ENCODE measurements at regions of chr20 and their contacts with region 1.

Region 1: GRCh38 chr20:52083627-52084232 is 107.8 kb downstream of the ZFP64 start:
- DNase-seq: peak; percentile 54
- ATAC-seq: peak; percentile 85
- H3K4me3 ChIP-seq: no peak overlapping the region
- H3K27ac ChIP-seq: no peak overlapping the region
- H3K4me1 ChIP-seq: no peaks in the 10 kb centered on the region
- H3K27me3 ChIP-seq: no peaks in the 10 kb centered on the region
- CTCF ChIP-seq: peak; percentile 58 to 85 (median 77)
- POLR2A ChIP-seq: no peak
- RAD21 ChIP-seq: peak; percentile 95

Region 2: DNA sequence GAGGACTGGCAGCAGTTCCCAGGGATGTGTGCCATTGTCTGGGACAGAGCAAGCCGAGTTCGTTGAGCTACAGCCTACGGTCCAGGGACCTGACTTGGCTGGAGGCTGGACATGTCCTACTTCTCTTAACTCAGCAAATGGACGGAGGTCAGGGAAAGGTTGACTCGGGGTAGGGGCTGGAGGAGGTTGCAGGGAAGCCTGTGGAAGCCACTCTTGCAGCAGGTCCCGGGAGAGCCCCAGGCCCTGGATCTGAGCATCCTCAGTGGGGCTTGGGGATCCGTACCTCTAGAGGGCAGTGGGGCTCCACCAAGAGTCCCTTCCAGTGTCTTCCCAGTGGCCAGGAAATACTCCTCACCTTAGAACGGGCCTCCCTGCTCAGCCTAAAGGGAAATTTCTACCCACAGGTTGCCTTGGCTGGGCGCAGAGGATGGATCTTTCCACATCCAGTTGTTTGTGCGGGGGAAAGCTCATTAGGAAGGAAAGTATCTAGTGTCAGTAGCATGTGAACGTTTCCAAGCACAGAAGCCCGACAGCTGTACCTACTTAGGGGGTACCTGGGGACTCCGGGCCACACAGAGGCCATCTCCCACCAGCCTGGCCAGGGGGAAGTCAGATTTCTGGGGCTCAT is 711.4 kb before region 1 on chr20:
- CTCF ChIA-PET with region 1: interaction called, 4 read pairs
- POLR2A ChIA-PET with region 1: no interaction called
- RAD21 ChIA-PET with region 1: no interaction called
- intact Hi-C with region 1: loop called (anchors 1 kb)
- DNase-seq: peak; percentile 49
- ATAC-seq: peak; percentile 99
- H3K4me3 ChIP-seq: no peak overlapping the region
- H3K27ac ChIP-seq: no peak overlapping the region
- H3K4me1 ChIP-seq: peaks cover 0 to 7% of the 10 kb centered on the region in 2 experiments; a peak in 1 of 4 replicates
- H3K27me3 ChIP-seq: no peaks in the 10 kb centered on the region
- CTCF ChIP-seq: peak; percentile 71 to 88 (median 79); a peak in 5 of 6 replicates
- POLR2A ChIP-seq: no peak
- RAD21 ChIP-seq: peak; percentile 91

Region 3: DNA sequence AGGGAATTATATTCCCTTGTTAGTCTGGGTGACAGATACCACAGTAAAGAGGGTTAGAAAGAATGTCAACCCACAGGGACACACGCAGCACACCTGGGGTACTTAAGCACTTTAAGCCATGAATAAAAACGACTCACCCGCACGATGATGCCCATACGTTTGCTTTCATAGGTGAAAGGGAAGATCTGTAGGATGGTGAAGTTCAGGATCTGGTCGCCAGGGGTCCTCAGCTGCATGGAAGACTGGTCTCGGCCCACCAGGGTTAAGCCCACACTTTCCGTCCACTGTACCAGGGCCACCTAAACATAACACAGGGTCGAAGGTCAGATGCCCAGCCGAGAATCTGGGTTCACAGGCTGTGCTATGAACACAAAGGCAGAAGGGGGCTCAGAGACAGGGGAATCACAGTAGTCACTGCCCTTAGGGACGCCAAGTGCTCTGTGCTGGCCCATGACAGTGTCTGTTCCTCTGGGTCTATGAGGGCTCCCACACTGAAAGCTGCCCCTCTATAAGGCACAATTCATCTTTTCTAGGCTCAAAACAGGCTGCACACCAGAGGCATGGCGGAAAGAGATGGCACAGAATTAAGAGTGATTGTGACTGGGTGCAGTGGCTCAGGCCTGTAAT is 444.4 kb before region 1 on chr20:
- CTCF ChIA-PET with region 1: interaction called, 6 read pairs
- POLR2A ChIA-PET with region 1: interaction called, 3 read pairs
- RAD21 ChIA-PET with region 1: no interaction called
- intact Hi-C with region 1: loop called (anchors 1 kb)
- DNase-seq: peak; percentile 52
- ATAC-seq: peak; percentile 85
- H3K4me3 ChIP-seq: peak overlapping the region in 1 of 2 experiments; percentile 26; a peak in 1 of 4 replicates
- H3K27ac ChIP-seq: no peak overlapping the region
- H3K4me1 ChIP-seq: peaks cover 10 to 49% of the 10 kb centered on the region in 2 experiments; a peak in 3 of 4 replicates
- H3K27me3 ChIP-seq: no peaks in the 10 kb centered on the region
- CTCF ChIP-seq: peak; percentile 74 to 86 (median 84); a peak in 5 of 6 replicates
- POLR2A ChIP-seq: no peak
- RAD21 ChIP-seq: peak; percentile 94

Region 4: DNA sequence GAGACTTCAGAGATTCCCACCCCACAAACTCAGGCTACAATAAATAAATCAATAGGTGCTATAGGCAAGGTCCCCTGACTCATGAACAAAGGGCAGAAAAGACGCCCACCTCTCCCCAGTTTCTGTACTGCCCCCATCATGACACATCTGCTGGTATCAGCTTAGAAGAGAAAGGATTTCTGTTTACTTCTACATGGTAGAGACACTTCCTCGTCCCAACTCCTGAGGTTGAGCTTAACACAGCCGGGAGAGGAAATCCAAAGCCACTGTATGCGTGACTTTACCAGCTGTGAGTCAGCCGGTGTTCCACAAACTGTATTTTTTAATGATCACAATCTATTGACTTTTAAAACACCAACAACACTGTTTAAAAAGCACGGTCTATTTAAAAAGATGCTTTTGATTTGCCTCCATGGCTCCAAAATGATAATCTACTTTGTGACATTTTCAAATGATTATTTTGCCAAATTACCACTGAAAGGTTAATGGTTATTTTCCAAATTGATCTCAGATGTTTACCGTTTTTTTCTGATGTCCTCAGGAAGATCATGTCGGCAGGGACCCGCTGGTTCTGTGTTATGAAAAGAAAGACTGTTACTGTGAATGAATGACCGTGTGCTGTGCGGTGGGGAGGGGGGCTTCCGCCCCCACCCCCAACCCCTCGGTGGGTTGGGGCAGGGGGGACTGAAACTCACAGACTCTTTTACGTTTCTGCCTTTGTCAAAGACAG is 388.0 kb before region 1 on chr20:
- CTCF ChIA-PET with region 1: interaction called, 11 read pairs
- POLR2A ChIA-PET with region 1: no interaction called
- RAD21 ChIA-PET with region 1: no interaction called
- intact Hi-C with region 1: loop called (anchors 1 kb)
- DNase-seq: no peak
- ATAC-seq: no peak
- H3K4me3 ChIP-seq: no peak overlapping the region
- H3K27ac ChIP-seq: no peak overlapping the region
- H3K4me1 ChIP-seq: peaks cover 0 to 23% of the 10 kb centered on the region in 2 experiments; a peak in 3 of 4 replicates
- H3K27me3 ChIP-seq: no peaks in the 10 kb centered on the region
- CTCF ChIP-seq: no peak
- POLR2A ChIP-seq: no peak
- RAD21 ChIP-seq: no peak

Region 5: DNA sequence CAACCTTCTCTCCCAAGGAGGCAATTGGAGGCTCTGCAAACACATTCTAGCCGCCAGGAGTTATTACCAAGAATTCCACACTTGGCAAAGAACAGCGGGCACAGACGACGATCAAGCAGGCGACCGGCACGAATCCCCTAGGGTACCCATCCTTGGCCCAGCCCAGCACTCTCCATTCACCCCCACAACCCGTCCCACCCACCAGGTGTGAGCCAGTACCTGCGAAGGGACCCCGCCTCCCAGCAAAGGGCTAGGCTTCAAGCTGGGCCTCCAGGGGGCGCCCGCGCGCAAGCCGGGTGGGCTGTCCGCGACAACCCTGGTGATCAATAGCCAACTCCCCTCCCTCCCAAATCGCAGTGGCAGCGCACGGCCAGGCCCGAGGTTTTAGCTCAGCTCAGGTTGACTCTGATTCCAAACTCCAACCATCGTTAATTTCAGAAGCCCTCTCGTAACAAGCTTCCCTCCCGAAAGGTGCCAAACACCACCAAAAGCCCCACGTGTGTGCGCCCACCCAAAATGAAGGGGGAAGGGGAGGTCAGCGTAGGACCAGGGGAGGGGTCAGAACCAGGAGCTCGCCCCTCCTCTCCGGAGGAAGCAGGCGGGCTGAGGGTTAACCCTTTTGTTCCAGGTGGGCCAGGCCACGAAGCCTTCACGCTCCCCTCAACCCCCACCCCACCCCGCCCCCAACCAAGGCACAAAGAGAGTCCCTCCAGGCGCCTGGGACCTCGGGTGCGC is 283.5 kb before region 1 on chr20:
- CTCF ChIA-PET with region 1: no interaction called
- POLR2A ChIA-PET with region 1: no interaction called
- RAD21 ChIA-PET with region 1: no interaction called
- intact Hi-C with region 1: loop called (anchors 5 kb)
- DNase-seq: peak; percentile 35
- ATAC-seq: peak; percentile 98
- H3K4me3 ChIP-seq: peak overlapping the region; percentile 42 to 57
- H3K27ac ChIP-seq: no peak overlapping the region
- H3K4me1 ChIP-seq: peaks cover 0 to 18% of the 10 kb centered on the region in 2 experiments; a peak in 2 of 4 replicates
- H3K27me3 ChIP-seq: no peaks in the 10 kb centered on the region
- CTCF ChIP-seq: peak; percentile 61 to 97 (median 95)
- POLR2A ChIP-seq: no peak
- RAD21 ChIP-seq: peak; percentile 75

Region 6: DNA sequence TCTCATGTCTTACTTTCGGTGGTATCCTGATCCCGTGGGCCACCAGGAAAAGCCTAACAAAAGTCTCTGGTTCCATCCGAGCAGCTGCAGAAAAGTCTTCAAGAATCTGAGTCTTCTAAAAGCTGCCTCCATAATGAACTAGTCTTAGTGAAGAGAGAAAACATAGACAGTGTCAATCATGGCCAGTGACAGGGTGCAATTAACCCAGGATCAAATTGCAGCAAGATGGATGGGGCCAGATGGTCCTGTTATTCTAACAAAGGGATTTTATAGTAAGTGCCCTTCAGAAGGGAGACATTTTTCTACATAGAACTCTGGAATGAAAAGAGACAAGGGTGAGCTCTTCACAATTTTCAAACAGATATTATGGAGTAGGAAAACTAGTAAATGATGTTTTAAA is 389.5 kb after region 1 on chr20:
- CTCF ChIA-PET with region 1: no interaction called
- POLR2A ChIA-PET with region 1: no interaction called
- RAD21 ChIA-PET with region 1: no interaction called
- intact Hi-C with region 1: no loop called
- DNase-seq: no peak
- ATAC-seq: no peak
- H3K4me3 ChIP-seq: no peak overlapping the region
- H3K27ac ChIP-seq: no peak overlapping the region
- H3K4me1 ChIP-seq: no peaks in the 10 kb centered on the region
- H3K27me3 ChIP-seq: no peaks in the 10 kb centered on the region
- CTCF ChIP-seq: no peak
- POLR2A ChIP-seq: no peak
- RAD21 ChIP-seq: no peak

Measured in HCT116 (cell line).